Right ventricle myocardium inferior (tissue), 1 donor: ENCODE measurements at regions of chr10 and their contacts with region 1.

Region 1: GRCh38 chr10:70363971-70364771 is 18.3 kb downstream of the LRRC20 start:
- DNase-seq: peak; percentile 94
- ATAC-seq: peak; percentile 97

Region 2: DNA sequence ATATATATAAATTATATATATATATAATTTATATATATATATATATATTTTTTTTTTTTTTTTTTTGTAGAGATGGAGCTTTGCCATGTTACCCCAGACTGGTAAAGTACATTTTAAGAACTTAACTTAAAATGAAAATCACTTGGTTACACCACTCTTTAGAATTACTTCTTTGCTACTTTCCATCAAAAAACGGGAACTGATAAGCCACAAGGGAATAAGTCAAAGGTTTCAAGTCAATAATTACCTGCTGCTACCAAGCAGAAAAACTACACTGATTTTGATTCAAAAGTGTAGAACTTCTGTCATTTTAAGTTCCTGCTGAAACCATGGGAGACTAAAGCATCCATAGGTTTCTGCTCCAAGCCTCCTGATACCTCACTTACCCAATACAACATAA is 143.1 kb before region 1 on chr10:
- intact Hi-C with region 1: loop called (anchors 1 kb)
- DNase-seq: no peak
- ATAC-seq: no peak

Region 3: GRCh38 chr10:70274643-70275042 is 89.5 kb before region 1 on chr10:
- intact Hi-C with region 1: loop called (anchors 2 kb)
- DNase-seq: no peak
- ATAC-seq: peak; percentile 76

Region 4: DNA sequence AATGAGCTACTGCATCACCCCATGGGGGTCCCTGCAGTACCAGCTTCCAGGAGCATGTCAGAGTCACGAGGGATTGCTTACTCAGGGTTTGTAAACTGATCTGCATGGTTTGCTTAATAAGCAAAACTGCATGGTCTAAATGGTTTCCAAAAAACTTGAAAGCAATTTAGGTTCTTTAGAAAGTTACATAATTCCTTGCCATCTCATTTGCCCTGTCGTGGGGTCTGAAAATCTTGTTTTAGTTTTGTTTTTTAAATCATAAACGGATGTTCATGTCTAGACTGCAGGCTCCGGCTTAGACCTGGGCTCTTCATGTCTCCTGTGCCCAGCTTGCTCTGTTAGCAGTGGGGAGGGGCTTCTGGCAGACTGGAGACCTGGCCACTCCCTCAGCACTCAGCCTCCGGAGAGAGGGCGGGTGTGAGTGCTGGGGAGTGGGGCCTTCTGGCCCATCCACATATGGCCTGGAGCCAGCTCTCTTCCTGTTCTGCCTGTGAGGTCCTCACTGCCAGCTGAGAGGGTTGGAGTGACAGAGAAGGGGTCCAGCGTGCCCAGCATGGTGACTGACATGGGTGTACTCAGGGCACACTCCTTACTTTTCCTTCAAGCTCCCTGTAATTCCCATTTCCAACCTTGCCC is 220.9 kb after region 1 on chr10:
- intact Hi-C with region 1: no loop called
- DNase-seq: no peak
- ATAC-seq: no peak